ENCODE measurements at regions of chr13 and their contacts with region 1.

Region 1: DNA sequence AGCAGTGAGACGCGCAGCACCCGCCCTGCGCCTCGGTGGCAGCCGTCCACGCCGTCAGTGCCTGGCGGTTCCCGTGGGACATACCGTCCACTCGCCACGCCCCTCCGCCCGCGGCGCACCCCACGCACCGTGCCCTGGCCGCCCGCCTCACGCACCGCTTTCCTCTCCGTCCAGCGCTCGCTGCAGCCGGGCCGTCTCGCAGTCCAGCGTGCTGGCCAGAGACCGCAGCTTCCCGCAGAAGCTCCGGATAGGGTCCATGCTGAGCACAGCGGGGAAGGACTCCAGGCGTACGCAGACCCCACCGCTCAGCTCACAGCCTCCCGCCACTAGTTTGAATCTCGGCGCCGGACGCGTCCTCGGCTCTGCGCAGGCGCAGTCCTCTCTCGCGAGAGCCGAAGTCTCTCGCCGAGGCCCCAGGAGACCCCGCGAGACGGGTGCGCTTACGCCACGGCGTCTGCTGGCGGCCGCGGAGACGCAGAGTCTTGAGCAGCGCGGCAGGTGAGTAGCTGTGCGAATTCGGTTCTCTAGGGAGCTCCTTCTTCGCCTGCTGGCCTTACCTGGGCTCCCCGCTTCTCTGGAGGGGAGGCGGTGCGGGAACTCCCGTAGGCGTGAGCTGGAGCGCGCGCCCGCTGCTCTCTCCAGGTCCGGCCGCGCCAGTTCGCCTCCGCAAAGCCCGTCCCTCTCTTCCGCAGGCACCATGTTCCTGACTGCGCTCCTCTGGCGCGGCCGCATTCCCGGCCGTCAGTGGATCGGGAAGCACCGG is at the starts of genes MRPL57 and SKA3:
- DNase-seq: peak; percentile 90 to 97 (median 94)
- ATAC-seq: peak; percentile 97
- H3K4me3 ChIP-seq: peak within 1 kb of the TSS; percentile 86
- H3K4me3 Mint-ChIP-seq: peak within 1 kb of the TSS; percentile 95 to 99 (median 97)
- H3K27ac ChIP-seq: peak within 1 kb of the TSS; percentile 95
- H3K27ac Mint-ChIP-seq: peak within 1 kb of the TSS; percentile 80 to 97 (median 95)
- H3K4me1 ChIP-seq: peaks cover 10 to 16% of the 10 kb centered on the region in 2 donors
- H3K4me1 Mint-ChIP-seq: peaks cover 13 to 31% (median 22%) of the 10 kb centered on the region in 7 donors
- H3K27me3 ChIP-seq: no peaks in the 10 kb centered on the region
- H3K27me3 Mint-ChIP-seq: no peaks in the 10 kb centered on the region
- total RNA-seq, gene MRPL57: 10.6 to 22.8 (median 19.8) TPM
- total RNA-seq, gene SKA3: 0.46 to 35.0 (median 1.6) TPM in 4 of 5 experiments, not detected in the other

Region 2: DNA sequence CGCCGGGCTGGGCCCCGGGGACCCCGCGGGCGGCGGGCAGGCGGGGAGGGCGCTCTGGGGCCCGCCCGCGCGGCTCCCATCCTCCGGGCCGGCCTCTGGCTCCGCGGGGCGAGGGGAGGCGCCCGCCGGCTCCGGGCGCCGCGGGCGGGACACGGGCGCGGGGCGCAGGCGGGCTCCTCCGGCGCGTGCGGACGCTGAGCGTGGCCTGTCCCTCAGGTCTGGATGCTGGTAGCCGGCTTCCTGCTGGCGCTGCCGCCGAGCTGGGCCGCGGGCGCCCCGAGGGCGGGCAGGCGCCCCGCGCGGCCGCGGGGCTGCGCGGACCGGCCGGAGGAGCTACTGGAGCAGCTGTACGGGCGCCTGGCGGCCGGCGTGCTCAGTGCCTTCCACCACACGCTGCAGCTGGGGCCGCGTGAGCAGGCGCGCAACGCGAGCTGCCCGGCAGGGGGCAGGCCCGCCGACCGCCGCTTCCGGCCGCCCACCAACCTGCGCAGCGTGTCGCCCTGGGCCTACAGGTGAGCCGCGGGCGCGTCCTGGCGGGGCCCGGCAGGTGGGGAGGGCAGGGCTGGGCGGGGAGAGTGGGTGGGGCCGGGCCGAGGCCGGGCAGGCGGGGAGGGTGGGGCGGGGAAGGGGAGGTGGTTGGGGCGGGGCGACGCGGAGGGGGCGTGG is 472.5 kb before region 1 on chr13:
- CTCF ChIA-PET with region 1: no interaction called
- POLR2A ChIA-PET with region 1: no interaction called
- intact Hi-C with region 1: loop called in 1 of 2 experiments (anchors 10 kb)
- DNase-seq: peak; percentile 70 to 84 (median 80)
- ATAC-seq: peak; percentile 93
- H3K4me3 ChIP-seq: no peak overlapping the region
- H3K4me3 Mint-ChIP-seq: peak overlapping the region in 4 of 10 donors; percentile 59 to 97 (median 72)
- H3K27ac ChIP-seq: no peak overlapping the region
- H3K27ac Mint-ChIP-seq: peak overlapping the region in 1 of 9 donors; percentile 56
- H3K4me1 ChIP-seq: peaks cover 3 to 8% of the 10 kb centered on the region in 2 donors
- H3K4me1 Mint-ChIP-seq: peaks cover 0 to 13% (median 8%) of the 10 kb centered on the region in 7 donors
- H3K27me3 ChIP-seq: peaks cover 0 to 5% of the 10 kb centered on the region in 2 donors
- H3K27me3 Mint-ChIP-seq: peaks cover 13 to 48% (median 17%) of the 10 kb centered on the region in 5 donors

Region 3: DNA sequence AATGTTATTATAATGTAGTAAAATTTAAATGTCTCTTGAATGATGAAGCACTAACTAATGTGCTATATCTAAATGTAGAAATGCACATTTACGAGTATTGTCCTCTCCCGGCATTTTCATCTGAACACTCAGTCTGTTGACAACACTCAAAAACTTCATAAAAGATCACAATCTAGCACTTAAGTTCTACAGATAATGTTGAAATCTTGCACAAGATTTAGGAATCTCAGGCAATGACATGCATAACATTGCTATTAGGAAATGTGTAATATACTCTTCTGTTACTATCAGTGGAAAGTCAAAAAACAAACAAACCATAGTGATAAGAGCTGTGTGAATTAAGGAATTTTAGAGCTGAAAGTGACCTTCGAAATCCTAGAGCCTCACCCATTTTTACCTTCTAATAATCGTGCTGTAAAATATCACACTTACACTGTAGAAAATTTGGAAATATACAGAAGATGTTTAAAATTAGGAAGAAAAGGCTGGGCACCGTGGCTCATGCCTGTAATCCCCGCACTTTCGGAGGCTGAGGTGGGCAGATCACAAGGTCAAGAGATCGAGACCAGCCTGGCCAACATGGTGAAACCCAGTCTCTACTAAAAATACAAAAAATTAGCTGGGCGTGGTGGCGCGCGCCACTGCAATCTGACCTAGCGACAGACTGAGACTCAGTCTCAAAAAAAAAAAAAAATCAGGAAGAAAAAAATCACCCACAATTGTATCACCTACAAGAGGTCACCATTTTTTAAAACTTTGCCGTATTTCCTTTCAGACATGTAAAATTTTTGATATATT is 236.1 kb before region 1 on chr13:
- CTCF ChIA-PET with region 1: interaction called, 3 read pairs
- POLR2A ChIA-PET with region 1: no interaction called
- intact Hi-C with region 1: loop called (anchors 1 kb)
- DNase-seq: no peak
- ATAC-seq: no peak
- H3K4me3 ChIP-seq: no peak overlapping the region
- H3K4me3 Mint-ChIP-seq: no peak overlapping the region
- H3K27ac ChIP-seq: no peak overlapping the region
- H3K27ac Mint-ChIP-seq: no peak overlapping the region
- H3K4me1 ChIP-seq: no peaks in the 10 kb centered on the region
- H3K4me1 Mint-ChIP-seq: peaks cover 0 to 7% (median 3%) of the 10 kb centered on the region in 7 donors
- H3K27me3 ChIP-seq: no peaks in the 10 kb centered on the region
- H3K27me3 Mint-ChIP-seq: peaks cover 16 to 43% (median 22%) of the 10 kb centered on the region in 5 donors

Region 4: DNA sequence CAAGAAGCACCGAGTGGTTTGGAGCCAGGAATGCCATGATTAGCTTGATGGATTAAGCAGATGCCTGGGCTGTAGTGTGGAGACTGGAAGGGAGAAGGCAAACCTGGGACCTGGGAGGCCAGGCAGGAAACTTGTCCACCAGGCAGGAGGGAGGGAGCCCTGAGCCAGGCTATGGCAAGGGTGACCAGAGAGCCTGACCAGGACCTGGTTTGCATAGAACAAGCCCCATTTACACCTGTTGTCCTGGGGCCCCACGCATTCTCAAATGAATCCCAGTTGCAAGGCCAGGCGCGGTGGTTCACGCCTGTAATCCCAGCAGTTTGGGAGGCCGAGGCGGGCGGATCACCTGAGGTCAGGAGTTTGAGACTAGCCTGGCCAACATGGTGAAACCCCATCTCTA is 64.9 kb before region 1 on chr13:
- CTCF ChIA-PET with region 1: interaction called, 7 read pairs
- POLR2A ChIA-PET with region 1: no interaction called
- intact Hi-C with region 1: loop called (anchors 1 to 2 kb)
- DNase-seq: no peak
- ATAC-seq: no peak
- H3K4me3 ChIP-seq: no peak overlapping the region
- H3K4me3 Mint-ChIP-seq: no peak overlapping the region
- H3K27ac ChIP-seq: no peak overlapping the region
- H3K27ac Mint-ChIP-seq: no peak overlapping the region
- H3K4me1 ChIP-seq: no peaks in the 10 kb centered on the region
- H3K4me1 Mint-ChIP-seq: peaks cover 0 to 2% (median 0%) of the 10 kb centered on the region in 7 donors
- H3K27me3 ChIP-seq: no peaks in the 10 kb centered on the region
- H3K27me3 Mint-ChIP-seq: no peaks in the 10 kb centered on the region

Region 5: GRCh38 chr13:21218351-21219035 is 42.1 kb after region 1 on chr13:
- CTCF ChIA-PET with region 1: no interaction called
- POLR2A ChIA-PET with region 1: no interaction called
- intact Hi-C with region 1: loop called in 1 of 2 experiments (anchors 1 kb)
- DNase-seq: peak in 1 of 9 donors; percentile 8
- ATAC-seq: peak; percentile 58
- H3K4me3 ChIP-seq: no peak overlapping the region
- H3K4me3 Mint-ChIP-seq: peak overlapping the region in 2 of 10 donors; percentile 30 to 57
- H3K27ac ChIP-seq: no peak overlapping the region
- H3K27ac Mint-ChIP-seq: peak overlapping the region in 1 of 9 donors; percentile 79
- H3K4me1 ChIP-seq: peaks cover 7 to 14% of the 10 kb centered on the region in 2 donors
- H3K4me1 Mint-ChIP-seq: peaks cover 6 to 19% (median 18%) of the 10 kb centered on the region in 7 donors
- H3K27me3 ChIP-seq: no peaks in the 10 kb centered on the region
- H3K27me3 Mint-ChIP-seq: peaks cover 4 to 40% (median 17%) of the 10 kb centered on the region in 5 donors

Region 6: GRCh38 chr13:21476893-21477472 is 300.6 kb after region 1 on chr13:
- CTCF ChIA-PET with region 1: interaction called, 8 read pairs
- POLR2A ChIA-PET with region 1: no interaction called
- intact Hi-C with region 1: loop called (anchors 1 to 2 kb)
- DNase-seq: peak; percentile 59 to 82 (median 65)
- ATAC-seq: peak; percentile 94
- H3K4me3 ChIP-seq: peak overlapping the region; percentile 50
- H3K4me3 Mint-ChIP-seq: peak overlapping the region; percentile 74 to 87 (median 82)
- H3K27ac ChIP-seq: peak overlapping the region; percentile 24
- H3K27ac Mint-ChIP-seq: peak overlapping the region in 8 of 9 donors; percentile 22 to 86 (median 58)
- H3K4me1 ChIP-seq: no peaks in the 10 kb centered on the region
- H3K4me1 Mint-ChIP-seq: peaks cover 7 to 17% (median 11%) of the 10 kb centered on the region in 7 donors
- H3K27me3 ChIP-seq: no peaks in the 10 kb centered on the region
- H3K27me3 Mint-ChIP-seq: peaks cover 0 to 5% (median 0%) of the 10 kb centered on the region in 5 donors

Region 7: GRCh38 chr13:21528621-21529020 is 352.2 kb after region 1 on chr13:
- CTCF ChIA-PET with region 1: no interaction called
- POLR2A ChIA-PET with region 1: no interaction called
- intact Hi-C with region 1: no loop called
- DNase-seq: no peak
- ATAC-seq: no peak
- H3K4me3 ChIP-seq: no peak overlapping the region
- H3K4me3 Mint-ChIP-seq: no peak overlapping the region
- H3K27ac ChIP-seq: no peak overlapping the region
- H3K27ac Mint-ChIP-seq: no peak overlapping the region
- H3K4me1 ChIP-seq: peaks cover 0 to 18% of the 10 kb centered on the region in 2 donors
- H3K4me1 Mint-ChIP-seq: peaks cover 0 to 23% (median 7%) of the 10 kb centered on the region in 7 donors
- H3K27me3 ChIP-seq: no peaks in the 10 kb centered on the region
- H3K27me3 Mint-ChIP-seq: no peaks in the 10 kb centered on the region